MCF 10A (cell line): ENCODE measurements at regions of chrX and their contacts with region 1.

Region 1: DNA sequence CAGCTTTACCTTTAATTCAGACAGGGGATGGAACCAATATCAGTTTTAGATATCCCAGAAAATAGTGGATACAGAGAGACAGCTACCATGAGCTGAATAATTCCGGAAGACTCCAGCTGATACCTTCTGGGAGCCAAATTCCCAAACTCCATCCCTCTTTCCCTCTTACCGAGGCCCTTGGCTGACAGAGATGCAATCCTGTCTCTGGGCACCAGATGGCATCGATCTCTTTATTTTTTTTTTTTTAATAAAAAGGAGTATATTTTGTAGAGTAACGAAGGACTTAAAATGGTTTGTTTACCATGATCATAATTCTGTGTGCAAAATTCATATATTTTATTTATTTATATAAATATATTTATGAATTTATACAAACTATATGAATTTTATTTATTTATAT is 31.0 kb downstream of the RAB40A start:
- DNase-seq: peak; percentile 41
- H3K4me3 Mint-ChIP-seq: no peak overlapping the region
- H3K27ac Mint-ChIP-seq: no peak overlapping the region
- H3K4me1 Mint-ChIP-seq: no peaks in the 10 kb centered on the region
- H3K27me3 Mint-ChIP-seq: peaks cover 48% of the 10 kb centered on the region
- CTCF ChIP-seq: peak; percentile 53

Region 2: DNA sequence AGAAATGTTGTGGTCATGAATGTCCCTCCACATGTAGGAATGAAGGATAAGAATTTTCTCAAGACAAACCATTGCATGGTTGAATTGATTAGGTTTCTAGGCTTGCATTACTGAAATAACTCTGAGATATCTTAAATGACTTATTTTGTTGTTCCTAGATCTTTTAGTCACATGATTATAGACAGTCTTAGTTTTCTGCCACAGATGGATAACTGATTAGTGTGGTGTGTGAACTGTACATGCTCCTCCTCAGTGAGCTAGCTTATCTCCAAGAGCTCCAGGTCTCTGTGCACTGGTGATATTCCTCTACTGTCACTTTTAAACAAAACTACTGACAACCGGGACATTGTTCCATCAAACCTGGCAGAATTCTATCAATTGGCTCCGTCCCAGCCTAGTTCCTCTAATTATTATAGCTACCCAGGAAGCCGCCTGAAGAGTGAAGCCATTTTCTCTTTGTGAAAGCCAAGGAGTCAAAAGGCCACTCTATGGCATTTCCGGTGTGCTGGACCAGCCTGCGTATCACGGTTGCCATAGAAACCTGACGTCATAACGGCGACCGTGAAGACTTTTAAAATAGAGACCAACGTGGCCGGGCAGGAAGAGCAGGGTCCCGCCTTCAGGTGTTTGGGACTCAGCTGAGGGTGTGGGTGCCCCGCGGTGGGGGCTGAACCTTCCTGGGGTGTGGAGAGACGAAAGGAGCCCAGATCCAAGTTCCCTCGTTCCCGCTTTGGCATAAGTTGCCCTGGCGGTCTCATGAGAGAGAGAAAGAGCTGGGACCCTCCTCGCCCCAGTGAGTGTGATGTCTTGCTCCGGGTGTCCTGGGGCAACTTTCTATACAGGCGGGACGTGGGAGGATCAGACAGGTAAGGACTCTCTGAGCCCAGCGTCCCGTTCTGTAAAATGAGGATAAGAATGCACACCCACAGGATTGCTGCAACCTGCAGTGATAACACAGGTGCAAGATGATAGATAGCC is 83.8 kb before region 1 on chrX:
- CTCF ChIA-PET with region 1: no interaction called
- POLR2A ChIA-PET with region 1: no interaction called
- intact Hi-C with region 1: no loop called
- DNase-seq: peak; percentile 66
- H3K4me3 Mint-ChIP-seq: peak overlapping the region; percentile 83
- H3K27ac Mint-ChIP-seq: peak overlapping the region; percentile 97
- H3K4me1 Mint-ChIP-seq: no peaks in the 10 kb centered on the region
- H3K27me3 Mint-ChIP-seq: peaks cover 70% of the 10 kb centered on the region
- CTCF ChIP-seq: no peak

Region 3: DNA sequence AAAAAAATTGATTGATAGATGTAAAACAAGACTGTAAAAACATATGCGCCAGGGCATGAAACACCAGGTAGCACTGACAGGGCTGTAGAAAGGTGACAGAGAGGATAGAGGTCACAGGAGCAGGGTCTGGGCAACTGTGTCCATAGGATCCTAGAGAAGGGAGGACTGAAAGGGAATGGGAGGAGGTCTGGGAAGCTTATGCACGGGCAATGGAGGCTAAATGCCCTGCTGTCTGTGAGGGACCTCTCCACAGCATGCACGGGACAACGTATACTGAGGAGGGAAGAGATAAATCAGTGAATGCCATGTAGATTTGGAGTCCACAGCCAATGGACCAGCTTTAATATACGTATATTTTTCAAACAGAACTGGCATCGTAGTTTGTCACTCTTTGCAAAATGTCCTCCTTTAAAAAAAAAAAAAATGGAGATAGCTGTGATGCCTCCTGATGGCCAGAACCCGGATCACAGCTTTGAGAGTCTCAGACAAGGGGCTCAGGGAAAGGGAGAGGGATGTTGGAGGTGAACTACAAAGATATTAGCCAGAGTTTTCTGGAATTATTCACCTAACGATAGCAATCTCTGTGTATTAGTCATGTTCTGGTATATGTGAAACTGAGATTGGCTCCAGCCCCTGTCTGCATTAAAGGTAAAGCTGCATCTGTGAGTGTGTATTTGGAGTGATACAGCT is 15.0 kb after region 1 on chrX:
- CTCF ChIA-PET with region 1: interaction called, 26 read pairs
- POLR2A ChIA-PET with region 1: no interaction called
- intact Hi-C with region 1: no loop called
- DNase-seq: peak; percentile 5
- H3K4me3 Mint-ChIP-seq: no peak overlapping the region
- H3K27ac Mint-ChIP-seq: peak overlapping the region; percentile 42
- H3K4me1 Mint-ChIP-seq: peaks cover 12% of the 10 kb centered on the region
- H3K27me3 Mint-ChIP-seq: peaks cover 50% of the 10 kb centered on the region
- CTCF ChIP-seq: no peak

Region 4: DNA sequence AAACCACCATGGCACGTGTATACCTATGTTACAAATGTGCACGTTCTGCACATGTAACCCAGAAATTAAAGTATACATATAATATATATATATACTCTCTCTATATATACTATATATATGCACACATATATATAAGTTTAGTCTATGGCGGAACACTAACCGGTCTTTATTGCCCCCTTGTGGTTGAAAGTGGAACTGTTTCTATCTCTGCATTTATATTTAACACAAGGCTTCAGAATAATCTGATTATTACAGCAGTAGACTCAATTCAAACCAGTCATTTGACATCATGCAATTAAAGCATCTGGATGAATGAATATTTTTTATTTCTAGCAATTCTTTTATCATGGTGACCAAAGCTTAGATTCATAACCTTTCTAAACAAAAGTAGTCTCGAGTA is 329.2 kb after region 1 on chrX:
- CTCF ChIA-PET with region 1: interaction called, 5 read pairs
- POLR2A ChIA-PET with region 1: no interaction called
- intact Hi-C with region 1: loop called (anchors 2 kb)
- DNase-seq: peak; percentile 66
- H3K4me3 Mint-ChIP-seq: no peak overlapping the region
- H3K27ac Mint-ChIP-seq: no peak overlapping the region
- H3K4me1 Mint-ChIP-seq: no peaks in the 10 kb centered on the region
- H3K27me3 Mint-ChIP-seq: peaks cover 36% of the 10 kb centered on the region
- CTCF ChIP-seq: peak; percentile 68